ENCODE measurements at regions of chr15 and their contacts with region 1.

Region 1: DNA sequence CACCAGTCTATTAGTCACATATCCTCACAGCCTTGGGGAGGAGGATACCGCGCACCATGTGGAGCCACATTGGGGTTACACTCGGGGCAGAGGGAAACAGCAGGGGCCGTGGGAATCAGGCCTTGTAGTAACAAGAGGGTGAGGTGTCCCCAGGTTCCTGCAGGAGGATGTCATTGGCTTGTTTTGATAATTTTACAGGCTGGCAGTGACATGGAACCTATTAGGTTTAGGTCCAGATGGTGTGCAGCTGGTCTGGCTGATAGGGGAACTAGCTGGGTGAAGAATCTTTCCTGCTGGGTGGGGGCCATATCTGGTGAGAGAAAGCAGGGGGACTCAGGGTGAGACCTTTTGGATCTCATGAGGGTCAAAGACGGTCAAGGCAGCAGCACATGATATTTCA is 9.8 kb upstream of the MEF2A start:
- DNase-seq: no peak
- ATAC-seq: no peak
- H3K4me3 ChIP-seq: no peak overlapping the region
- H3K27ac ChIP-seq: no peak overlapping the region
- H3K4me1 ChIP-seq: no peaks in the 10 kb centered on the region
- H3K27me3 ChIP-seq: no peaks in the 10 kb centered on the region; a peak in 1 of 5 replicates
- CTCF ChIP-seq: no peak
- EP300 ChIP-seq: no peak
- POLR2A ChIP-seq: no peak
- RAD21 ChIP-seq: no peak

Region 2: DNA sequence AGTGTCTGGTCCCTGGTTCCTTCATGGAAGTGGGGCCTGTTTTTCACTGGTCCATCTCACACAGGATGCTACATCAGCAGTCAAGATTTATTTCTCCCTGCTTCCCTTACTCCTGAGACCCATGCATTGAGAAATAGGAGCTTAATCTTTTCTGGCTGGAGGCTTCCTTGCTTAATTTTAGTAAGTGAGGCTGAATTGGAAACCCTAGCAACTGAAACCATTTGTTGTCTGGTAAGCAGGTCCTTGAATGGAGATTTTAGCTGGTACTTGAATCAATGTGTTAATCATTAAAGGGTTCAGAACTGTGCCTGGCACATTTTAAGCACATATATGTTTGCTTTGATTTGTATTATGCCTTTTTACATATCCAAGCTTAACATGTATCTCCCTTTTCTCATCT is 10.4 kb before region 1 on chr15:
- CTCF ChIA-PET with region 1: no interaction called
- POLR2A ChIA-PET with region 1: interaction called, 16 read pairs
- in situ Hi-C with region 1: no loop called
- intact Hi-C with region 1: no loop called
- DNase-seq: no peak
- ATAC-seq: no peak
- H3K4me3 ChIP-seq: no peak overlapping the region
- H3K27ac ChIP-seq: no peak overlapping the region
- H3K4me1 ChIP-seq: no peaks in the 10 kb centered on the region
- H3K27me3 ChIP-seq: peaks cover 0 to 25% of the 10 kb centered on the region in 2 experiments; a peak in 2 of 5 replicates
- CTCF ChIP-seq: no peak
- EP300 ChIP-seq: no peak
- POLR2A ChIP-seq: no peak
- RAD21 ChIP-seq: no peak

Region 3: GRCh38 chr15:99826157-99826780 is 270.3 kb after region 1 on chr15:
- CTCF ChIA-PET with region 1: no interaction called
- POLR2A ChIA-PET with region 1: no interaction called
- in situ Hi-C with region 1: no loop called
- intact Hi-C with region 1: no loop called
- DNase-seq: no peak
- ATAC-seq: no peak
- H3K4me3 ChIP-seq: no peak overlapping the region
- H3K27ac ChIP-seq: no peak overlapping the region
- H3K4me1 ChIP-seq: no peaks in the 10 kb centered on the region
- H3K27me3 ChIP-seq: no peaks in the 10 kb centered on the region
- CTCF ChIP-seq: no peak
- EP300 ChIP-seq: no peak
- POLR2A ChIP-seq: no peak
- RAD21 ChIP-seq: no peak

Measured in K562 (cell line).